Endothelial cell of umbilical vein (primary cell): ENCODE measurements at regions of chr10 and their contacts with region 1.

Region 1: DNA sequence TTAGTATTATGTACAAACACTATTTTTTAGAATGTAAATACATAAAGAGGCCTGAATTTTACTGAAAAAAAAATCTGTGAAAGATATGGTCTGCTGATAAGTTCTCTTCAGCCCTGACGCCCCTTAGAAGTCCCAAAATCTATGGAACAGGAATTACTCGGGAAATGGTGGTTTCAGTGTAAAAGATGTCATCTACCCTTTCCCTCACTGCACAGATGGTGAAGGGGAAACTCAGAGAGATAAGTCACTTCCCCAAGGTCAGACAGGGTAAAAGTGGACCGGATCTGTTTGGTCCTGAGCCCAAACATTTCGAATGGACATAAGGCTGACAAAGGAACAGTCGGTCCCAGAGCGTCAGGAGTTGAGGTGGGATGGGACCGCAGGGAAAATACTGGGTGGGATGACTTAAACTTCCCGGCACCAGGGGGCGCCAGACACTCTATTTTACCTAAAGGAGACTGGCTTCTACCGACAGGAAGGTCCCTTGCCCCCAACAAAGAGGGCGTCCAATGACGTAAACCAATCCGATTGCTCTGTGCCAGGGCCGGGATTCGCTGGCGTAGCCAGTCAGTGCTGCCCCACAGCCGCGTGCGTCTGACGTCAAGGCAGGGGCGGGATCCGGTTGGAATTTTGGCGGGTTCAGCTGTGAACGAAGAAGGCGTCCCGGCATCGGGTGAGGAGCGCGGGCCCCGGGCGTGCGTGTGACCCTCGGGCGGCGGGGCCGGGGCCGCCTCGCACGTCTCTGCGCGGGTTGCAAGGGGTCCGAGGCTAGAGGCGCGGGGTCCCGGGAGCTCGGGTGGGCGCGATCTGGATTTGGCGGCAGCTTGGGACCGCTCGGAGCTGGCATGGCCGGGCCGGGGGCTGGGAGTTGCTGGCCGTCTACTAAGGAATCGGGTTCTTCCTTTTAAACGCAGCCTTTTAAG is at the start of gene MCM10:
- DNase-seq: peak; percentile 99
- H3K4me3 ChIP-seq: peak within 1 kb of the TSS; percentile 71 to 93 (median 85)
- H3K27ac ChIP-seq: peak within 1 kb of the TSS; percentile 52
- H3K4me1 ChIP-seq: peaks cover 13% of the 10 kb centered on the region
- H3K27me3 ChIP-seq: no peaks in the 10 kb centered on the region
- CTCF ChIP-seq: peak; percentile 85 to 93
- POLR2A ChIP-seq: peak; percentile 49
- total RNA-seq, gene MCM10: 28.7 and 31.6 TPM in 2 replicates

Region 2: DNA sequence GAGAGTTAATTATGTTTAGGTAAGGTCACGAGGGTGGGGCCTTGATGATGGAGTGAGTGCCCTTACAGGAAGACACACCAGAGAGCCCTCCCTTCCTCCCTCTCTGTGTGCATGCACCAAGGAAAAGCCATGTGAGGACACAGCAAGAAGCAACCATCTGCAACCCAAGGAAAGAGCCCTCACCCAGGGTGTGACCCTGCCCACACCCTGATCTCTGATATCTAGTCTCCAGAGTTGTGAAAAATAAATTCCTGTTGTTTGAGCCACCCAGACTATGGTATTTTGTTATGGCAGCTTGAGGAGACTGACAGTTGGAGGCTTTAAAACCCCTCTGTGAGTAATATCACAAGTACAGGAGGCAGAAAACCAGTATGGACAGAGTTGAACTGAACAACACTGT is 14.8 kb before region 1 on chr10:
- CTCF ChIA-PET with region 1: interaction called, 19 read pairs
- POLR2A ChIA-PET with region 1: interaction called, 5 read pairs
- dilution Hi-C with region 1: no loop called
- intact Hi-C with region 1: no loop called
- DNase-seq: no peak
- H3K4me3 ChIP-seq: no peak overlapping the region
- H3K27ac ChIP-seq: no peak overlapping the region
- H3K4me1 ChIP-seq: no peaks in the 10 kb centered on the region
- H3K27me3 ChIP-seq: no peaks in the 10 kb centered on the region
- CTCF ChIP-seq: no peak
- POLR2A ChIP-seq: no peak

Region 3: GRCh38 chr10:13348216-13349017 is 187.2 kb after region 1 on chr10 and contains the start of gene SEPHS1:
- CTCF ChIA-PET with region 1: no interaction called
- POLR2A ChIA-PET with region 1: no interaction called
- dilution Hi-C with region 1: no loop called
- intact Hi-C with region 1: loop called (anchors 2 kb)
- DNase-seq: peak; percentile 62
- H3K4me3 ChIP-seq: peak within 1 kb of the TSS; percentile 40 to 84 (median 82)
- H3K27ac ChIP-seq: peak within 1 kb of the TSS; percentile 65
- H3K4me1 ChIP-seq: peaks cover 24% of the 10 kb centered on the region
- H3K27me3 ChIP-seq: peaks cover 30 to 36% of the 10 kb centered on the region in 2 experiments
- CTCF ChIP-seq: peak in 1 of 2 donors; percentile 5
- POLR2A ChIP-seq: no peak
- total RNA-seq, gene SEPHS1: 55.4 and 59.9 TPM in 2 replicates